ENCODE measurements at regions of chr12 and their contacts with region 1.

Region 1: DNA sequence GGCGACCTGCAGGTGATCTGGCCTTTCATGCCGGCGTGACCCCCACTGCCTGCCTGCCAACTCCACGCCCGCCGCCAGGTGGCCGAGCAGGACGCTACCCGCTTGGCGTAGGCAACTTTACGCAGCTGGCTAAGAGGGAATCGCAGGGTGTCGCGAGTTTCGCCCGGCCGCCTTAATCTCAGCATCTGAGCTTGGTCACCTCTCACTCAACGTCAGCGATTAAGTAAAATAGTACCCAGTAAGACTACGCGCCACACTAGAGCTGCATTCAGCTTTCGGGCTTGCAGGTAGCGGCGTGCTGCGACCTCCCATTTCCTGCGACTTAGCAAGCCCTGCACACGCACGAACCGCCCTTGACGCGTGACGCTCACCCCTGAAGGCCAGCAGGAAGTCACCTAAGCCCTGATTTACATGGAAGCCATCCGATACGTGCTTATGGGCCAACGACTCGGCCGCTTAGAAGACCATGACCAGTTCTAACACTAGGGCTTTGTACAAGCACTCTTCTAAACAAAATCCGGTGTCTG is 33.2 kb downstream of the WBP11 start:
- DNase-seq: peak; percentile 87 to 94 (median 90)
- H3K4me3 ChIP-seq: peak overlapping the region; percentile 88 to 92
- H3K4me3 Mint-ChIP-seq: peak overlapping the region; percentile 94 to 99 (median 97)
- H3K27ac ChIP-seq: peak overlapping the region; percentile 98
- H3K27ac Mint-ChIP-seq: peak overlapping the region; percentile 97 to 100 (median 99)
- H3K4me1 ChIP-seq: peaks cover 50% of the 10 kb centered on the region
- H3K4me1 Mint-ChIP-seq: peaks cover 30 to 83% (median 50%) of the 10 kb centered on the region in 4 donors
- H3K27me3 ChIP-seq: no peaks in the 10 kb centered on the region
- H3K27me3 Mint-ChIP-seq: no peaks in the 10 kb centered on the region

Region 2: DNA sequence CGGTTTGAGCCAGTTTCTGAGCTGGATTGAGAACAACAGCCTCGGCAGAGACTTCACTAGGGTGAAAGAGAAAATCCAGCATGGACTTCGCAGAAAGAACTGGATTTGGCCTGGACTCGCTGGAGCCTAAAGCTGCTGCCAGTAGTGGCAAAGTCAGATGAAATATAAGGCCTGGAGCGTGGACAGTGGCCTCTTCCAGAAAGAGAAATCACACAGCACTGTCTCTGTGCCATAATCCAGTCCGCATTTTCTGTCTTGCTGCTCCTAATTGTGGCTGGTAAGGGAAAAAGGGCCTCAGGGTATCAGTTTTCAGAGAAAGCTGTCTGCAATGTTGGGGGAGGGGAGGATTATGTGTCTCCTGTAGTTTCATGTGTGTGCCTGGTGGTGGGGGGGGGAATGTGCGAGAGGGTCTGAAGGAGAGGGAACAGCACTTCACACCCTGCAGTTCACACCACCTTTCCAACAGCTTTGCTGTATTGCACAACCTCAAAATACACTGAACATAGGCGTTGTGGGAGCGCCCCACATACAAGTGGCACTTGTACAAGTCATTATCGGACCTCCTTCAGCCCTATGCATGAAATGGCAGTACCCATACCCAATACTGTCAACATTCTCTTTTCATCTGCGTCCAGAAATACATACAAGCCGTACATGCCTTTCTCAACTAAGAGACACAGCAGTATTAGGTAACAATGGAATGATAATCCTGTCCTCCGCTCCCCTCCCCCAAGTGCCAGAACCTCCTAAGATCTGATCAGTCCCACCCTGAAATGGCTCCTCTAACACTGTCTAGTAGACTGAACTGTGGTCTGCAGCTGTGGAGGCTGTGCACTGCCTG is 512.1 kb before region 1 on chr12:
- CTCF ChIA-PET with region 1: interaction called, 3 read pairs
- POLR2A ChIA-PET with region 1: interaction called, 18 read pairs
- intact Hi-C with region 1: loop called (anchors 5 kb)
- DNase-seq: peak; percentile 81 to 92 (median 84)
- H3K4me3 ChIP-seq: peak overlapping the region; percentile 1 to 31
- H3K4me3 Mint-ChIP-seq: peak overlapping the region; percentile 75 to 91 (median 84)
- H3K27ac ChIP-seq: peak overlapping the region; percentile 49
- H3K27ac Mint-ChIP-seq: peak overlapping the region; percentile 95 to 99 (median 98)
- H3K4me1 ChIP-seq: peaks cover 44% of the 10 kb centered on the region
- H3K4me1 Mint-ChIP-seq: peaks cover 35 to 57% (median 42%) of the 10 kb centered on the region in 4 donors
- H3K27me3 ChIP-seq: no peaks in the 10 kb centered on the region
- H3K27me3 Mint-ChIP-seq: no peaks in the 10 kb centered on the region

Region 3: GRCh38 chr12:14635776-14636175 is 134.3 kb before region 1 on chr12:
- CTCF ChIA-PET with region 1: no interaction called
- POLR2A ChIA-PET with region 1: no interaction called
- intact Hi-C with region 1: no loop called
- DNase-seq: no peak
- H3K4me3 ChIP-seq: no peak overlapping the region
- H3K4me3 Mint-ChIP-seq: no peak overlapping the region
- H3K27ac ChIP-seq: no peak overlapping the region
- H3K27ac Mint-ChIP-seq: no peak overlapping the region
- H3K4me1 ChIP-seq: no peaks in the 10 kb centered on the region
- H3K4me1 Mint-ChIP-seq: no peaks in the 10 kb centered on the region
- H3K27me3 ChIP-seq: no peaks in the 10 kb centered on the region
- H3K27me3 Mint-ChIP-seq: peaks cover 0 to under 1% of the 10 kb centered on the region in 2 donors

Region 4: GRCh38 chr12:14723763-14724162 is 46.3 kb before region 1 on chr12:
- CTCF ChIA-PET with region 1: interaction called, 12 read pairs
- POLR2A ChIA-PET with region 1: interaction called, 4 read pairs
- intact Hi-C with region 1: loop called (anchors 1 kb)
- DNase-seq: peak; percentile 49 to 66 (median 62)
- H3K4me3 ChIP-seq: no peak overlapping the region
- H3K4me3 Mint-ChIP-seq: no peak overlapping the region
- H3K27ac ChIP-seq: no peak overlapping the region
- H3K27ac Mint-ChIP-seq: peak overlapping the region in 1 of 7 donors; percentile 15
- H3K4me1 ChIP-seq: no peaks in the 10 kb centered on the region
- H3K4me1 Mint-ChIP-seq: peaks cover 0 to 3% (median 1%) of the 10 kb centered on the region in 4 donors
- H3K27me3 ChIP-seq: no peaks in the 10 kb centered on the region
- H3K27me3 Mint-ChIP-seq: peaks cover 5 to 6% of the 10 kb centered on the region in 2 donors

Region 5: DNA sequence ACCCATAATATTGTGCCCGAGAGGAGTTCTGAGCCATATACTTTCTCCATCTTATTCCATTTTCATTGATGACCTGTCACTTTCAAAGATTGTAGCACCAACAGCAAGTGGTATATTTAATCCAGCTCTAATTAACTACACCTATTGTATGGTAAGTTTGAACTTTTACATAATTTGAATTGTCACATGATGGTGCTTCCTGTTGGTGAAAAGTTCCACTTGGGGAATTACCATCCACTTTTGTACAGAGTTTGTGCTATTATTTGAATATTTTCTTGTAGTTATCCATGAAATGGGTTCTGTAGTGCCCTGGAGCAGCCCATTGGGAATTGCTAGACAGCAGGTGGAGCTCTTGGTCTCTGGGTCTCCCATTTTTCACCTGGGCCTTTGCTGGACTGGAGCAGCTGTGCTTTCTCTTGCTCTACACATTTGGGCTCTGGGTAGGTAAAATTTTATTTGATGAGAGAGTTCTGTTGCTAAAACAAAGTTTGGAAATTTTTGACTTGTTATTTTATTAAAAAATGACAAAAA is 41.0 kb after region 1 on chr12:
- CTCF ChIA-PET with region 1: interaction called, 14 read pairs
- POLR2A ChIA-PET with region 1: interaction called, 376 read pairs
- intact Hi-C with region 1: no loop called
- DNase-seq: no peak
- H3K4me3 ChIP-seq: no peak overlapping the region
- H3K4me3 Mint-ChIP-seq: peak overlapping the region in 1 of 8 donors; percentile 45
- H3K27ac ChIP-seq: no peak overlapping the region
- H3K27ac Mint-ChIP-seq: no peak overlapping the region
- H3K4me1 ChIP-seq: peaks cover 12% of the 10 kb centered on the region
- H3K4me1 Mint-ChIP-seq: peaks cover 5 to 14% (median 11%) of the 10 kb centered on the region in 4 donors
- H3K27me3 ChIP-seq: no peaks in the 10 kb centered on the region
- H3K27me3 Mint-ChIP-seq: no peaks in the 10 kb centered on the region

Region 6: DNA sequence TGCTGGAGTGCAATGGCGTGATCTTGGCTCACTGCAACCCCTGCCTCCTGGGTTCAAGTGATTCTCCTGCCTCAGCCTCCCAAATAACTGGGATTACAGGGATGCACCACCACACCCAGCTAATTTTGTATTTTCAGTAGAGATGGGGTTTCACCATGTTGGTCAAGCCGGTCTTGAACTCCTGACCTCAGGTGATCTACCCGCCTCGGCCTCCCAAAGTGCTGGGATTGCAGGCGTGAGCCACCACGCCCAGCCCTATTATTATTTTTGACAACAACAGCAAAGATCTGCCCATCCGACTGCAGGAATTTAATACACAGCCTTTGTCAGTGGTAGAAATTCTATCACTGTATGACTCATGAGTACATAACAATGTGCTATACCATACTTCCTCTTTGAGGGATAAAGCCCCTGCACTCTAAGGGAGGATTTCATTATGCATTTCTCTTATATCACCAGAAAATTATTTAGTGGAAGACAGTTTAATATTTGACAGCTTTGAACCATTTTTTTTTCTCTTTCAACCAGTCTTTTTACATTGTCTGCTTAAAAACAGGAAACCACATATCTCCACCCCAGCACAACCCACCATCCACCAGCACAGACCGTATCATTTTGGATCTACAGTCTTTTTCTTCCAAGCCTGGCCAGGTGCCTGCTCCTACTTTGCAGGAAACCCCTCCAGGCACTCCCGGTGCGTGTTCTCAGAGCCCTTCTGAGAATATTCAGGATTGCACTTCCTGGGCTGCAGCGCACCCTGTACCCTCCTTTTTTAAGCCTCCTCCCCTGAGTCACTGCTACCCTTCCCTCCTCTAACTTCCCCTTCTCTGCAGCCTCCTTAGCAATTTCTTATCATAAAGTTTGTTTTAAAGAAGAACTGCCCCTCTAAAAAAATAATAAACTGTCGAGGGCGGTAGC is 190.8 kb after region 1 on chr12:
- CTCF ChIA-PET with region 1: interaction called, 4 read pairs
- POLR2A ChIA-PET with region 1: interaction called, 224 read pairs
- intact Hi-C with region 1: loop called (anchors 1 kb)
- DNase-seq: peak; percentile 72 to 78 (median 76)
- H3K4me3 ChIP-seq: peak overlapping the region; percentile 77 to 90
- H3K4me3 Mint-ChIP-seq: peak overlapping the region; percentile 96 to 100 (median 99)
- H3K27ac ChIP-seq: peak overlapping the region; percentile 92
- H3K27ac Mint-ChIP-seq: peak overlapping the region; percentile 97 to 99 (median 98)
- H3K4me1 ChIP-seq: peaks cover 64% of the 10 kb centered on the region
- H3K4me1 Mint-ChIP-seq: peaks cover 33 to 89% (median 48%) of the 10 kb centered on the region in 4 donors
- H3K27me3 ChIP-seq: no peaks in the 10 kb centered on the region
- H3K27me3 Mint-ChIP-seq: no peaks in the 10 kb centered on the region

Region 7: DNA sequence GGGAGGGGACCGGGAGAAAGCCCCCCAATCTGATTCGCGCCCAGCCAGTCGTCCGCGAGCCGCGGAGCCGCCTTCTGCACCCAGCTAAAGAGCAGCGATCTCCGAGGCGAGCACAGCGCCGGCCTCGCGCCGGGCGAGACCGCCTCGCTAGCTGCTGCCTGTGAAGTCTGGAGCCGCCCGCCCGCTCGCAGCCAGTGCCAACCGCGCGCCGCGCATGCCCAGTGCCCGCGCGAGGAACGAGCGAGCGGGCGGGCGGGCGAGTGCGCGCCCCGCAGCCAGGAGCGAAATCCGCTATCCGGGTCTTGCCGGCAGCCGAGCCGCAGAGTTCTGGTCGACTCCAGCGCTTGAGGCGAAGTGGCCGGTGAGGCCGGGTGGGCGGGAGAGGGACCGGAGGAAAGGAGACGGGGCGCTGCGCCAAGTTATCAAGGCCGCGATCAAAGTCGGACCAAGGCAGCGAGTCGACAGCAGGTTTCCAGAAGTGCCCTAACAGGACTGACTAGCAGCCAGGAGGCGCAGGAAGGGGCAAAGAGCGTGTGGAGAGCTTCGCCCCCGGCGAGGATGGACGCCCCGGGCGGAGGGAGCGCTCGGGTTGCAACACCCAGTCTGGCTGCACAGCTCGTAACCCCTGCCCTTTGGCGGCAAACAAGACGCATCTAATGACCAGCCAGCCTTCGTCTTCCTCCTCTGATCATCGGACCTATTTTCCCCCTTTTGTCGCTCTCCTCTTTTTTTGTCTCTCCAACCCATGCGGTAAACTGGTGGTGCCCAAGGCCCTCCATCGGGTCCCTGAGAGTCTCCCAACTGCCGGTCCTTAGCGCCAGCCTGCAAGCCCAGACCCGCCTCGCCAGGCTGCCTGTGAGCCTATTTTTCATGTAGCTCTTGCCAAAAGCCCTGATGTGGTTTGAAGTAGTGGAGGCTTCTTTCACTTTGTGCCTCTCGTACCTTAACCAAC is 1019.5 kb after region 1 on chr12 and contains the start of gene EPS8:
- CTCF ChIA-PET with region 1: no interaction called
- POLR2A ChIA-PET with region 1: no interaction called
- intact Hi-C with region 1: loop called (anchors 5 kb)
- DNase-seq: peak; percentile 85 to 90 (median 90)
- H3K4me3 ChIP-seq: peak within 1 kb of the TSS; percentile 58 to 78
- H3K4me3 Mint-ChIP-seq: peak within 1 kb of the TSS; percentile 90 to 98 (median 96)
- H3K27ac ChIP-seq: peak within 1 kb of the TSS; percentile 38
- H3K27ac Mint-ChIP-seq: peak within 1 kb of the TSS; percentile 86 to 93 (median 90)
- H3K4me1 ChIP-seq: peaks cover 19% of the 10 kb centered on the region
- H3K4me1 Mint-ChIP-seq: peaks cover 12 to 19% (median 15%) of the 10 kb centered on the region in 4 donors
- H3K27me3 ChIP-seq: peaks cover 21% of the 10 kb centered on the region
- H3K27me3 Mint-ChIP-seq: peaks cover 12 to 29% of the 10 kb centered on the region in 2 donors
- total RNA-seq, gene EPS8: 2.6 to 3.8 TPM

Measured in CD4-positive, alpha-beta memory T cell (primary cell).